Activated T-helper 2 cell treated with anti-CD3 and anti-CD28 coated beads, Interferon-gamma antibody, Interleukin-2, Interleukin-4, amounts not matched to agents 10 μg/mL and 5 μg/mL and 100 μg/mL, durations not matched to agents 14 hours and 24 hours and 36 hours (primary cell): ENCODE measurements at regions of chr6 and their contacts with region 1.

Region 1: GRCh38 chr6:159062564-159062945 is 17.8 kb upstream of the TAGAP start:
- DNase-seq: peak; percentile 61
- H3K4me3 Mint-ChIP-seq: peak overlapping the region; percentile 65
- H3K27ac Mint-ChIP-seq: peak overlapping the region; percentile 94
- H3K4me1 Mint-ChIP-seq: peaks cover 81% of the 10 kb centered on the region
- H3K27me3 Mint-ChIP-seq: peaks cover 1% of the 10 kb centered on the region

Region 2: DNA sequence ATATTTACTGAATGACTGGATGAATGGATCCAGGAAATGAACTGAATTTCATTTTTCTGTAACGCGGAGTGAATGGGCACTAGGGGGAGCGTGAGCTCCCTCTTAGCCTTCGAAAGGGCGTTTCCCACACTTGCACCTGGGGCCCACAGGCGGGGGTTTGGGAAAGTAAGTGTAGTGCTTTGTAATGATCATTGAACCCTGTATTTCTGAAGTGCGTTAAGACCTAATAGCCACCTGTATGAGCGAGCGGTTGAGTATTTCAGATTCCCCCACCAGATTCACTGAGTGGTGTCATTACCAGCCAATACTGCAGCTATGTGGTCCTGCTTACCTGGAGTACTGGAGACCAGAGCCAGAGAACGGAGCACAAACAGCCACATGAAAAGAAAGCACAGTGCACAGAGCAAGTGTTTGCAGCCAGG is 402.2 kb before region 1 on chr6:
- intact Hi-C with region 1: no loop called
- DNase-seq: no peak
- H3K4me3 Mint-ChIP-seq: no peak overlapping the region
- H3K27ac Mint-ChIP-seq: no peak overlapping the region
- H3K4me1 Mint-ChIP-seq: peaks cover 53% of the 10 kb centered on the region
- H3K27me3 Mint-ChIP-seq: no peaks in the 10 kb centered on the region

Region 3: GRCh38 chr6:158910484-158911348 is 151.8 kb before region 1 on chr6:
- intact Hi-C with region 1: no loop called
- DNase-seq: no peak
- H3K4me3 Mint-ChIP-seq: no peak overlapping the region
- H3K27ac Mint-ChIP-seq: no peak overlapping the region
- H3K4me1 Mint-ChIP-seq: peaks cover 25% of the 10 kb centered on the region
- H3K27me3 Mint-ChIP-seq: no peaks in the 10 kb centered on the region

Region 4: DNA sequence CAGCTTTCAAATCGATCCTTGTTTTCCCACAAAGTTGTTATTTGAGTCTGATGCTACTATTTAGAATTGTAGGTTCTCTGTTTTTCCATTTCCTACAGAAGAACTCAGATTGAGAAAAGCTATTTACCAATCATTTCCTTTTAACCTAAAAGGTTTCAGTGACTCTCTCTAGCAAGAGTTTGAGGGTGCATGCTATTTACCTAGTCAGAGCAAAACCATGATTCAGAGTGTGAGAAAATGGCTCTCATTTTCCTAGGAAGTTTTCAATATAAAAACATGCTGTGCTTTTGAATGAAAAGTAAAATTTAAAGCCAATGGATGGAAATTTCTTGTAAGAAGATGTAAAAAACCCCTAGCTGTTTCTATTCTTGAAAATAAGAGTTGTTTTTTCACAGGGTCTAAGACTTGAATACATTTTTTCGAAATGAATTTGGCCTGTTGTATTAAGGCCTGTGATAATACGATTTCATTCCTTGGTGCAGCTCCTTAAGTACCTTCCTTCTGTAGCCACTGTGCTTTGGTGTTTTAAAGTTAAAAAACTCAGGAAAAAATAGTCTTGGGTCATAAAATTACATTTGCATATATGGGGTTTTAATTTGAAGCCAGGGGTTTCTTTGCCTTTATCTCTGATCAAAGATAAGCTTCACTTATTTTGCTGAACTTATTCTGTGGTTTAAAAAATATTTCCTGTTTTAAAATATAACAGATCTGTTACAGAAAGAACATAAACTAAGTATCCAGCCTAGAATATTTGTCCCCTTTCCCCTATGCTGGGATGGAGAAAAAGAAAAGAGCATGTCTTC is 44.6 kb before region 1 on chr6:
- intact Hi-C with region 1: loop called (anchors 1 kb)
- DNase-seq: no peak
- H3K4me3 Mint-ChIP-seq: peak overlapping the region; percentile 1
- H3K27ac Mint-ChIP-seq: peak overlapping the region; percentile 84
- H3K4me1 Mint-ChIP-seq: peaks cover 45% of the 10 kb centered on the region
- H3K27me3 Mint-ChIP-seq: no peaks in the 10 kb centered on the region

Region 5: GRCh38 chr6:159080217-159080976 is 17.8 kb after region 1 on chr6:
- intact Hi-C with region 1: loop called (anchors 2 kb)
- DNase-seq: no peak
- H3K4me3 Mint-ChIP-seq: no peak overlapping the region
- H3K27ac Mint-ChIP-seq: no peak overlapping the region
- H3K4me1 Mint-ChIP-seq: peaks cover 33% of the 10 kb centered on the region
- H3K27me3 Mint-ChIP-seq: no peaks in the 10 kb centered on the region

Region 6: DNA sequence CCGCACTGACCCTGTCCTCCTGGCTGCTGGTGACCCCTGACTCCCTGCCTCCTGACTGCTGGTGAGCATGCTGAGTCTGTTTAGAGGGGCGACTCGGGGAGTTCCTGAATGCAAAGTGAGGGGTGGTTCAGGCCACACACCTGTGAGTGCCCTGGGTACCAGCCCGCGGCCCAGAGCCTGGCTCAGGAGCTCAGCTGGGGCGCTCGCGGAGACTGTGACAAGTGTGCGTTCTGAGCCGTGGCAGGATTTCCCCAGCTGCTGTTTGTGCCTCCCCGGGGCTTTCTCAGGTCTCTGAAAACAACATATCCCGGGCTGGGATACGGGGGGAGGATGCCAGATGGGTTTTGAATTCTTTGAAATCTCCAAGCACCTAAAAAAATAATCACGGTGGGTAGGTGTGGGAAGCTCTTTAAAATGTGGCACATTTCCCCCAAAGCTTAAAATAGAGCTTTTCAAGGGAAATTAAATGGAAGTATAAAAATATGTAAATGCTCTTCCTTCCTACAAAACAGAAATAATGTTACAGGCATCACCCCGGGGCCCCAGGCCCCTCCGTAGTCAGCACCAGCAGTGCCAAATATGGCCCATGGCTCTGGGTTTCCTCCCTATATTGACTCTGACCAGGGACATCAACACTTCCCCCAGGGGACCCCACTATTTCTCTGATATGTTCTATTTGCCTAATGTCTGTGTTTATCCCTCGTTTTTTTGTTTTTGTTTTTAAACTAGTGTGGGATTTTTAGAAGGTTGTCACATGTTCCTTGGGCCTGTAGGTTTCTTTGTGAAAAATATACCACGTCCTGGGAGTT is 32.1 kb after region 1 on chr6:
- intact Hi-C with region 1: loop called (anchors 2 kb)
- DNase-seq: no peak
- H3K4me3 Mint-ChIP-seq: peak overlapping the region; percentile 57
- H3K27ac Mint-ChIP-seq: peak overlapping the region; percentile 87
- H3K4me1 Mint-ChIP-seq: peaks cover 68% of the 10 kb centered on the region
- H3K27me3 Mint-ChIP-seq: no peaks in the 10 kb centered on the region

Region 7: DNA sequence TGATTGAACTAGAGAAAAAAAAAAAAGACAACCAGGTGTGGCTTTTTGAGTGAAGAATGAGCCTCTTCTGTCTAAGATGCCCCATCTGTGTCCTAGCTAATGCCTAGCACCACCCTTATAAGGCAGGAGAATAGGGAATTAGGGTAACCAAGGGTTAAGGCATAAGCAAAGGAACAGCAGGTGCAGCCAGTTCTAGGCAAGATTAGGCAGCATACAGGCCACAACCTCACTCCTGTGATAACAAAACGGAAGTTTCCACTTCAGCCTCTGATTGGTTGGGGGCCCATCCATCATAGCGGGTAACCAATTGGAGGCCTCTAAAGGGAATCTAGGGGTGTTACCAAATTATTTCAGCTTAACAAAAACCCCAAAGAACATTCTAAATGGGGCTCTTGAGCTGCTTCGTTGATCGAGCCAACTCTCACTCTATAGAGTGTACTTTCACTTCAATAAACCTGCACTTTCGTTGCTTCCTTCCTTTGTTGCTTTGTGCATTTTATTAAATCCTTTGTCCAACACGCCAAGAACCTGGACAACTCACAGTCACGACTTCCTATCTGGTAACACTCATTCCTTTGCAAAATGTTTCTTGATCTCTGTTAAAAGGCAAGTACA is 44.2 kb after region 1 on chr6:
- intact Hi-C with region 1: no loop called
- DNase-seq: peak; percentile 91
- H3K4me3 Mint-ChIP-seq: peak overlapping the region; percentile 78
- H3K27ac Mint-ChIP-seq: peak overlapping the region; percentile 93
- H3K4me1 Mint-ChIP-seq: peaks cover 73% of the 10 kb centered on the region
- H3K27me3 Mint-ChIP-seq: no peaks in the 10 kb centered on the region

Region 8: DNA sequence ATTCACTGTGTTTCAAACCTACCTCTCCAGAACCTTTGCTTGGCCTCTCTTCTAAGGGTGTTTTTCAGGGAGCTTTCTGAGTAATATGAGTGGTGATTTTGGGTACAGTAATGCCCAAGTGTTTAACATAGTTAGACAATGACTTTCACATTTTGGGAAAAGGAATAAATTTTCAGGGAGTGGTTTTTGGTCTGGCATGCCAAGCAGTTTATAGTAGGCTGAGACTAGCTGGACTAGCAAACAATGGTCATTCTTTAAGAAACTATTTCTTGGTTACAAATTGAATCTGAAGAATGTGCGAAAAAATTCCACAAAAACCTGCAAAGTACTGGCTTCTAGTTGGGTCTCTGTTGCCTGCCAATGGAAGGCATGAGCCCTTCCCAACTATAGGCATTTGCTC is 122.0 kb after region 1 on chr6:
- intact Hi-C with region 1: no loop called
- DNase-seq: no peak
- H3K4me3 Mint-ChIP-seq: no peak overlapping the region
- H3K27ac Mint-ChIP-seq: no peak overlapping the region
- H3K4me1 Mint-ChIP-seq: peaks cover 8% of the 10 kb centered on the region
- H3K27me3 Mint-ChIP-seq: peaks cover 9% of the 10 kb centered on the region